A673 (cell line): ENCODE measurements at regions of chr11 and their contacts with region 1.

Region 1: GRCh38 chr11:37124384-37124783 is 526.3 kb upstream of the RAG2 start:
- DNase-seq: no peak
- H3K4me3 ChIP-seq: no peak overlapping the region
- H3K27ac ChIP-seq: no peak overlapping the region
- H3K4me1 ChIP-seq: no peaks in the 10 kb centered on the region
- H3K27me3 ChIP-seq: no peaks in the 10 kb centered on the region
- CTCF ChIP-seq: no peak

Region 2: DNA sequence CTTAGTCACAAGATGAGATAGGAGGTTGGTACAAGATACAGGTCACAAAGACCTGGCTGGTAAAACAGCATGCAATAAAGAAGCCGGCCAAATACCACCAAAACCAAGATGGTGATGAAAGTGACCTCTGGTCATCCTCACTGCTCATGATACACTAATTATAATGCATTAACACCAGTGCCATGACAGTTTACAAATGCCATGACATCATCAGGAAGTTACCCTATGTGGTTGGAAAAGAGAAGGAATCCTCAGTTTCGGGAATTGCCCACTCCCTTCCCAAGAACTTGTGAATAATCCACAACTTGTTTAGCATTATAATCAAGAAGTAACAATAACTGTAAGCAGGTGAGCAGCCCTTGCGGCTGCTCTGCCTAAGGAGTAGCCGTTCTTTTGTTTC is 117.8 kb before region 1 on chr11:
- CTCF ChIA-PET with region 1: no interaction called
- POLR2A ChIA-PET with region 1: no interaction called
- intact Hi-C with region 1: no loop called
- DNase-seq: no peak
- H3K4me3 ChIP-seq: no peak overlapping the region
- H3K27ac ChIP-seq: no peak overlapping the region
- H3K4me1 ChIP-seq: peaks cover 25% of the 10 kb centered on the region
- H3K27me3 ChIP-seq: no peaks in the 10 kb centered on the region
- CTCF ChIP-seq: no peak

Region 3: DNA sequence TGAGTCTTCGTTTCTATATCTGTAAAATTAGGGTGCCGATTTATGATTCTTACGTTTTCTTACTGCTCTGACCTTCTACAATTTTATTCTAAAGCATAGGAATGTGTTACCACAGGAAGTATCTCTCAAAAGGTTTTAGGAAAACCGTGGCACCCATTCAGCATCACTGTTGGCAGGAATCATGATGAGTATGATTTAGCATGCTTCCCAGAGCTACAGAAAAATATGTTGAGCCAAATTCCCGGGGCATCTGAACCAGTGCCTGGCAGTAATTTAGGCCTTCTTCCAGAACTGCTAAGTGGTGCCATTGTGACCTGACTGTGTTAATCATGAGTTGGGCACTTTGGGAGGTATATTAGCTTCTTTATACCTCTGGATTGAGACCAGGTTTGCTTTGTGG is 78.6 kb after region 1 on chr11:
- CTCF ChIA-PET with region 1: no interaction called
- POLR2A ChIA-PET with region 1: interaction called, 26 read pairs
- intact Hi-C with region 1: no loop called
- DNase-seq: peak; percentile 32
- H3K4me3 ChIP-seq: no peak overlapping the region
- H3K27ac ChIP-seq: no peak overlapping the region
- H3K4me1 ChIP-seq: no peaks in the 10 kb centered on the region
- H3K27me3 ChIP-seq: no peaks in the 10 kb centered on the region
- CTCF ChIP-seq: no peak

Region 4: DNA sequence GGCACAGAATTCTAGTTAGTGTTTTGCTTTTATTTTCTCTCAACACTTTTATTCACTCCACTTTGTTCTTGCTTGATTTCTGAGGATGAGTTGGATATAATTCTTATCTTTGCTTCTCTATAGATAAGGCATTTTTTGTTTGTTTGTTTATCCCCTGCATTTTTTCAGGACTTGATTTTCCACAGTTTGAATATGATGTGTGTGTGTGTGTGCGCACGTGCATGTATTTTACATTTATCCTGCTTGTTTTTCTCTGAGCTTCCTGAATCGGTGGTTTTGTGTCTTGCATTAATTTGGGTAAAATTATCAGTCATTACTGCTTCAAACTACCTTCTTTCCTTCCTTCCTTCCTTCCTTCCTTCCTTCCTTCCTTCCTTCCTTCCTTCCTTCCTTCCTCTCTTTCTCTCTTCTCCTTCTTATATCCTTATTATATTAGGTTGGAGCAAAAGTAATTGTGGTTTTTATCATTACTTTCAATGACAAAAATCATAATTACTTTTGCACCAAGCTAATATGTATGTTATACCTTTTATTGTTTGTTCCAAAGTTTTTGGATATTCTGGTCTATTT is 153.6 kb after region 1 on chr11:
- CTCF ChIA-PET with region 1: no interaction called
- POLR2A ChIA-PET with region 1: no interaction called
- intact Hi-C with region 1: no loop called
- DNase-seq: peak; percentile 98
- H3K4me3 ChIP-seq: peak overlapping the region; percentile 26
- H3K27ac ChIP-seq: peak overlapping the region; percentile 100
- H3K4me1 ChIP-seq: peaks cover 61% of the 10 kb centered on the region
- H3K27me3 ChIP-seq: no peaks in the 10 kb centered on the region
- CTCF ChIP-seq: no peak